Ovary (tissue), 10 donors: ENCODE measurements at regions of chr9 and their contacts with region 1.

Region 1: GRCh38 chr9:110638381-110638954 is 30.1 kb upstream of the MUSK start:
- DNase-seq: no peak
- H3K4me3 ChIP-seq: no peak overlapping the region
- H3K27ac ChIP-seq: no peak overlapping the region
- H3K4me1 ChIP-seq: no peaks in the 10 kb centered on the region
- H3K27me3 ChIP-seq: no peaks in the 10 kb centered on the region
- CTCF ChIP-seq: peak; percentile 21 to 59 (median 27)
- EP300 ChIP-seq: no peak
- POLR2A ChIP-seq: no peak

Region 2: GRCh38 chr9:111037381-111038305 is 399.2 kb after region 1 on chr9:
- intact Hi-C with region 1: loop called in 1 of 4 experiments (anchors 10 kb)
- DNase-seq: peak; percentile 39 to 69 (median 49)
- H3K4me3 ChIP-seq: peak overlapping the region; percentile 57
- H3K27ac ChIP-seq: peak overlapping the region; percentile 74 to 89
- H3K4me1 ChIP-seq: peaks cover 8% of the 10 kb centered on the region
- H3K27me3 ChIP-seq: no peaks in the 10 kb centered on the region
- CTCF ChIP-seq: no peak
- EP300 ChIP-seq: no peak
- POLR2A ChIP-seq: no peak

Region 3: DNA sequence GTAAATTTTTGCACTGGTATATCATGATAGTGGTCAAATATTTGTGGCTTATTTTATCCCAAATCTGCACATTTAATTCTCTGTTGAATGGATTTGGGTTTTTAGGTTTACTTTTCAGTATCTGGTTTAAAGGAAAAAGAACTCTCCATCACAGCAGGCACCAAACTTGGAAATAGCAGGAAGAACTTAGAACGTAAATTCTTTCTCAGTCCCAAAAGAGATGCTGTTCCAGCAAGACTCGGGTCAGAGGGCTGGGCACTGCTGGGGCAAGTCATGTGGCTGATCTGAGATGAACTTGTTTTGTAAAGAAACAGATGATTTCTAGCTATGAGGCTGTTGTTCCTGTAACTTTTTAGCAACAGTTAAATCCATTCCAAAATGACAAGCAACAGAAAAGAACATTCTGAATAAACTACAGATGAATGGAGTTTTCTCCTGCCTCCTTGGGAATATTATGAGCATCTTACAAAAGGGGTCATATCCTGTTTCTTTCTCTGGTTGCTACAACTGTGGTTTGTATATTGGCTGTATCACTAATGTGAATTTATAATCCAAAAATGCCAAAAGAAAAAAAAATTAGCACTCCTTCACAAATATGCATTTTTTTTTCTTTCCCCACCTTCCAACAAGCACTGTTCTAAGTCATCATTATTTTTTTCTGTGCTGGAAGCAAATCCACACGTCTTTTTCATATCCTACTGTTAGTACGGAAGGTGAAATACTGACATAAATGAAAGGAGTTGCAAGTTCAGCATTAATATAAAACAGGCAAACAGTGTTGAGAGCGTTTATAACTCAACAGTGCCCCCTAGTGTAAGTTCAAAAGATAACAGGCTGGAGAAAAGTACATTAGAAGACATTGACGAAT is 660.5 kb after region 1 on chr9:
- intact Hi-C with region 1: loop called in 3 of 4 experiments (anchors 5 kb)
- DNase-seq: peak in 2 of 5 donors; percentile 19 to 45
- H3K4me3 ChIP-seq: no peak overlapping the region
- H3K27ac ChIP-seq: no peak overlapping the region
- H3K4me1 ChIP-seq: no peaks in the 10 kb centered on the region
- H3K27me3 ChIP-seq: no peaks in the 10 kb centered on the region
- CTCF ChIP-seq: peak; percentile 70 to 92 (median 82)
- EP300 ChIP-seq: no peak
- POLR2A ChIP-seq: no peak